ENCODE measurements at regions of chr7 and their contacts with region 1.

Region 1: DNA sequence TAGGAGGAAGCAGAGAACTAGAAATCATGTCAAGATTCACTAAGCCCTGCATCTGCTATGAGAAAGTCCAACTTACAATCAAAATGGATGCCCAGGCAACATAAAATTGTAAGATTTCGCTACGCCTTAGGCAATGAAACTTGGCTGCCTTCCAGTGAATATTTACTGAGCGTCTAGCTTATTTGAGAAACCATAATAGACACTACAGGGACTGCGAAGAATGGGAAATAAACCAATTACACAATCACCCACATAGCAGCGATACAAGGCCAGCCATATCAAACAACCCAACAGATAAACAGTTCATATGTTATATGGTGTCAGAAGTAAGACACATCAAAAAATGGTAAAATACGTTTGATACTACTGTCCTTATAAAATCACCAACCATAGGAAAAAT is 545.0 kb upstream of the C7orf33 start:
- DNase-seq: no peak
- H3K4me3 ChIP-seq: no peak overlapping the region
- H3K27ac ChIP-seq: no peak overlapping the region
- H3K4me1 ChIP-seq: no peaks in the 10 kb centered on the region
- H3K27me3 ChIP-seq: no peaks in the 10 kb centered on the region
- CTCF ChIP-seq: no peak
- EP300 ChIP-seq: no peak
- POLR2A ChIP-seq: no peak
- RAD21 ChIP-seq: no peak

Region 2: DNA sequence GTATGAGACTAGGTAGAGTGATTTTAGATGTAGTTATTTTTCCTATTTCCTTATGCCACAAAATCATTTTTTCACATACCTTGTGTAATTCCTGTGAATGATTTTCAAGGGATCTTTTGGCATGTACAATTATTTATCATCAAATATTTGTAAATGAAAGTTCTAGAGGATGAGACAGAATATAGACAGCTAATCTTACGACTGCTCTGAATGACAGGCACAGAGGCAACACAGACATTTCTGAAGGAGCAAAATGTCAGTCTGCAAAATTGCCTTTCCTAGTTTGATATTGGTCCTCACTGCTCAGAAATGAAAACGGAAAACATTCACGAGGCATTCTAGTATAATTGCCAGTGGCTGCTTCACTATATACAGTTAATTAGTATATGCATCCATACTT is 265.6 kb before region 1 on chr7:
- CTCF ChIA-PET with region 1: no interaction called
- POLR2A ChIA-PET with region 1: no interaction called
- DNase-seq: no peak
- H3K4me3 ChIP-seq: no peak overlapping the region
- H3K27ac ChIP-seq: no peak overlapping the region
- H3K4me1 ChIP-seq: no peaks in the 10 kb centered on the region
- H3K27me3 ChIP-seq: peaks cover 0 to 1% (median 0%) of the 10 kb centered on the region in 4 experiments; a peak in 1 of 7 replicates
- CTCF ChIP-seq: no peak
- EP300 ChIP-seq: no peak
- POLR2A ChIP-seq: no peak
- RAD21 ChIP-seq: no peak

Region 3: GRCh38 chr7:148060724-148061123 is 15.2 kb after region 1 on chr7:
- CTCF ChIA-PET with region 1: no interaction called
- POLR2A ChIA-PET with region 1: no interaction called
- DNase-seq: no peak
- H3K4me3 ChIP-seq: no peak overlapping the region
- H3K27ac ChIP-seq: no peak overlapping the region
- H3K4me1 ChIP-seq: no peaks in the 10 kb centered on the region
- H3K27me3 ChIP-seq: no peaks in the 10 kb centered on the region
- CTCF ChIP-seq: no peak
- EP300 ChIP-seq: no peak
- POLR2A ChIP-seq: no peak
- RAD21 ChIP-seq: no peak

Region 4: DNA sequence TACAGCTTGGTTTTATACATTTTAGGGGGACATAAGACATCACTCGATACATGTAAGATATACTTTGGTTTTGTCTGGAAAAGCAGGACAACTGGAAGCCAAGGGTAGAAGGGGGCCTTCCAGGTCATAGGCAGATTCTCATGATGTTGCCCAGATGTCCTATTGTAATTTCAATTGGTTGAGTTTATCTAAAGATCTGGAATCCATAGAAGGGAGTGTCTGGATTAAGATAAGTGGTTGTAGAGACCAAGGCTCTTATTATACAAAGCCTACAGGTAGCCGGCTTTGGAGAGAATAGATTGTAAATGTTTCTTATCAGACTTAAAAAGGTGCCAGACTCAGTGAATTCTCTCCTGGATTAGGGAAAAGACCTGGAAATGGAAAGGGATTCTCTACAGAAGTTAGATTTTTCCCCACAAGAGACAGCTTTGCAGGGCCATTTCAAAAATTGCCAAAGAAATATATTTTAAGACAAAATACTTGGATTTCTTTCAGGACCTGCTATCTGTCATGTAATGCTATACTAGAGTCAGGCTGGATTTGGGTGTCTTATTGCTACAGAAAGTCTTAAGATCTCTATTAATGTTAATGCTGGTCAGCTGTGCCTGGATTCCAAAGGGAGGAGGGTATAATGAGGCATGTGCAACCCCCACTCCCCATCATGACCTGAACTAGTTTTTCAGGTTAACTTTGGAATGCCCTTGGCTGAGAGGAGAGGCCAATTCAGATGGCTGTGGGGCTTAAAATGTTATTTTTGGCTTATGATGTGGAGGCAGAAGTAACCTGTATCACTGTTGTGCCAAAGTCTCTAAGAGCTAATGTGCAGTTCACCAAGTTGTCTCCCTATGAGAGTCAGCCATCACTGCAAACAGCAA is 33.9 kb after region 1 on chr7:
- CTCF ChIA-PET with region 1: interaction called, 10 read pairs
- POLR2A ChIA-PET with region 1: no interaction called
- DNase-seq: no peak
- H3K4me3 ChIP-seq: no peak overlapping the region
- H3K27ac ChIP-seq: no peak overlapping the region
- H3K4me1 ChIP-seq: no peaks in the 10 kb centered on the region
- H3K27me3 ChIP-seq: no peaks in the 10 kb centered on the region
- CTCF ChIP-seq: no peak
- EP300 ChIP-seq: no peak
- POLR2A ChIP-seq: no peak
- RAD21 ChIP-seq: no peak

Measured in H1 (cell line).